Activated CD8-positive, alpha-beta T cell treated with anti-CD3 and anti-CD28 coated beads for 36 hours (primary cell): ENCODE measurements at regions of chr1 and their contacts with region 1.

Region 1: DNA sequence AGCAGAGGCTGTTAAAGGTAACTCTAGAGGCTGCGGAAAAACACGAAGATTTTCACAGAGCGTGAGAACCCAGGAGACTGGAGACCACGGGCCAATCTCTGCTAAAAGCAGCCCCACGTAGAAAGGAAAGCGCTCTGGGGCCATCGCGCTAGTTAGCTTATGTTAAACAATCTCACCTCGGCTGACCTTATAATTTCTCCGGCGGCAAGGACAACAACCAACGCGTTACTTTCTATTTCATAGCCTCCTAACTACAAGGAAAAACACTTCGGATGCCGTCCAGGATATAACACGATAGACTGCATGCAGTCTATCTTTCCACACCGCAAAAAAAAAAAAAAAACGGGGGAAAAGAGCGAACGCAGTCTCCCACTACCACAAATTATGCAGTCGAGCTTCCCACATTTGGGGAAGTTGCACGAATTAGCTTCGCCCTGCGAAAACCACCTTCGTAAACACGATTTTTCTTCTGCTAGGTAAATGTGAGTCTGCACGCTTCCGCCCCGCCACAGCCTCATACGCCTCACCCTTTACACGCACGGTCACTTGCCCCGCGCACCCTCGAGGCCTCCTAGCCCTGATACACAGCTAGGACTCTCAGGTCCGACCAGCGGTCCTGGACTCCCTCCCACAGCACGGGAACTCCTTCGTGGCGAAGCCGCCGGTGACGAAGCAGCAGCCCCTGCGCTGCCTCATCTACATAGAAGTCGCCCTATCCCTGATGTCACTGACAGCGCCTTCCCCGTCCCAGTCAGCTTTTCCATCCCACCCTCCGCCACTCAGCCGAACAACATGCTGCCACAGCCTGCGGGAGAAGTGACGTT is 87.8 kb downstream of the PRKAB2 start:
- DNase-seq: peak; percentile 95
- ATAC-seq: peak; percentile 82
- H3K4me3 Mint-ChIP-seq: peak overlapping the region; percentile 86
- H3K27ac Mint-ChIP-seq: peak overlapping the region; percentile 100
- H3K4me1 Mint-ChIP-seq: peaks cover 44% of the 10 kb centered on the region
- H3K27me3 Mint-ChIP-seq: peaks cover 37% of the 10 kb centered on the region
- CTCF ChIP-seq: no peak

Region 2: GRCh38 chr1:147039916-147040315 is 44.6 kb before region 1 on chr1:
- CTCF ChIA-PET with region 1: no interaction called
- POLR2A ChIA-PET with region 1: interaction called, 55 read pairs
- intact Hi-C with region 1: no loop called
- DNase-seq: no peak
- ATAC-seq: no peak
- H3K4me3 Mint-ChIP-seq: no peak overlapping the region
- H3K27ac Mint-ChIP-seq: no peak overlapping the region
- H3K4me1 Mint-ChIP-seq: peaks cover 19% of the 10 kb centered on the region
- H3K27me3 Mint-ChIP-seq: peaks cover 2% of the 10 kb centered on the region
- CTCF ChIP-seq: no peak

Region 3: DNA sequence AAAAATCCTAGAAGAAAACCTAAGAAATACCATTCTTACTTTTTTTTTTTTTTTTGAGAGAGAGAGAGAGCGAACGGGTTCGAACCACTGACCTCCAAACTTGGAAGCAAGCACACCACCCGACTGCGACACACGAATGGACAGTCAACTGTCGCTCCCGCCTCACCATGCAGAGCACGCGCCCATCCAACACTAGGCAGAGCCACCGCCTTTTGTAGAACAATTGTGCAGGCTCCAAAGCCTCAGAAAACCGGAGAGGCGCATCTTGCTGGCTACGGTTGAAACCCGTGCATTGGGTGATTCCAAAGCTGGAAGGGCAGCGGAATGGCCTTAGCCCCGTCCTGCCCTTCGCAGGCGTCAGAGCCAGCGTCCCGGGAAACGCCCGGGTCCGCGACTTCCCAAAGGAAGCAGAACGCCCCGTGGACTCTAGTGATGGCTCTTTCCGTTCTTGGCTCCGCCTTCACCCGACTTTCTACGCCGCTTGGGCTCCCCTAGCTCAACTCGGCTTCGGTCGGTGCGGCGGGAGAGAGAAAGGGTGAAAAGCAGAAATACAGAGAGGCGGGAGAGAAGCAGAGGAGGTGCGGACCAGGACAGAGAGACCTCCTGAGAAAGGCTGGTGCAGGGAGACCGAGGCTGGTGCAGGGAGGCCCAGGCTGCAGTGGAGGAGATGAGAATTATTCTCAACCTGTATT is 12.0 kb before region 1 on chr1:
- CTCF ChIA-PET with region 1: no interaction called
- POLR2A ChIA-PET with region 1: interaction called, 17 read pairs
- intact Hi-C with region 1: no loop called
- DNase-seq: peak; percentile 55
- ATAC-seq: peak; percentile 74
- H3K4me3 Mint-ChIP-seq: peak overlapping the region; percentile 72
- H3K27ac Mint-ChIP-seq: peak overlapping the region; percentile 19
- H3K4me1 Mint-ChIP-seq: peaks cover 28% of the 10 kb centered on the region
- H3K27me3 Mint-ChIP-seq: peaks cover 41% of the 10 kb centered on the region
- CTCF ChIP-seq: no peak

Region 4: GRCh38 chr1:147172168-147172992 is 87.9 kb after region 1 on chr1 and contains the start of gene PRKAB2:
- CTCF ChIA-PET with region 1: no interaction called
- POLR2A ChIA-PET with region 1: interaction called, 76 read pairs
- intact Hi-C with region 1: no loop called
- DNase-seq: peak; percentile 94
- ATAC-seq: peak; percentile 89
- H3K4me3 Mint-ChIP-seq: peak within 1 kb of the TSS; percentile 98
- H3K27ac Mint-ChIP-seq: peak within 1 kb of the TSS; percentile 99
- H3K4me1 Mint-ChIP-seq: peaks cover 38% of the 10 kb centered on the region
- H3K27me3 Mint-ChIP-seq: no peaks in the 10 kb centered on the region
- CTCF ChIP-seq: peak; percentile 73
- total RNA-seq, gene PRKAB2: 5.8 to 6.4 TPM

Region 5: DNA sequence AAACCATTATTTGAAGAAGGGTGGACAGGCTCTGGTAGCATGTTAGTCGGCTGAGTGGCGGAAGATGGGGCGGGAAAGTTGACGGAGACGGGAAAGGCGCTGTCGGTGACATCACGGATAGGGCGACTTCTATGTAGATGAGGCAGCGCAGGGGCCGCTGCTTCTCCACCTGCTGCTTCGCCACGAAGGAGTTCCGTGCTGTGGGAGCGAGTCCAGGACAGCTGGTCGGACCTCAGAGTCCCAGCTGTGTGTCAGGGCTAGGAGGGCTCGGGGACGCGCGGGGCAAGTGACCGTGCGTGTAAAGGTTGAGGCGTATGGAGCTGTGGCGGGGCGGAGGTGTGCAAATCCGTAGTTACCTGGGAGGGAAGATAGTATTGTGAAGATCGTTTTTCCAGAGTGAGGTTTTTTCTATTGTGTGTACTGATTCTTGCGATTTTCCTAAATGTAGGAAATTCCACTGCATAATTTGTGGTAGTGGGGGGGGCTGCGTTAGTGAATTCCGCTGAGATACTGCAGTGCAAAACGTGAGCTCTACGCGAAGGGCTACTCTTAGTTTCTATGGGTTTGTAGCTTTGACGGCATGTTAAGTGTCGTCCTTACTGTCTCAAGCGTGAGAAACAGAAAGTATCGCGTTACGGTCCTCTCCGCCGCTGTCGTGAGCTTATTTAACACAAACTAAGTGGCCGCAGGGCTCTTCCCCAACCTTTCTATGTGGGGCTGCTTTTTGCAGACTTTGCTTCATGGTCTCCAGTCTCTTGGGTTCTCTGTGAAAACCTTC is 1178.8 kb after region 1 on chr1:
- CTCF ChIA-PET with region 1: no interaction called
- POLR2A ChIA-PET with region 1: interaction called, 10 read pairs
- intact Hi-C with region 1: no loop called
- DNase-seq: peak; percentile 92
- ATAC-seq: peak; percentile 90
- H3K4me3 Mint-ChIP-seq: peak overlapping the region; percentile 77
- H3K27ac Mint-ChIP-seq: peak overlapping the region; percentile 97
- H3K4me1 Mint-ChIP-seq: peaks cover 18% of the 10 kb centered on the region
- H3K27me3 Mint-ChIP-seq: peaks cover 9% of the 10 kb centered on the region
- CTCF ChIP-seq: no peak